PC-3 (cell line): ENCODE measurements at regions of chr21 and their contacts with region 1.

Region 1: GRCh38 chr21:33199516-33200217 is 30.1 kb upstream of the IFNAR2 start:
- DNase-seq: peak; percentile 95
- ATAC-seq: peak; percentile 60
- H3K4me3 ChIP-seq: no peak overlapping the region
- H3K27ac ChIP-seq: no peak overlapping the region
- H3K4me1 ChIP-seq: peaks cover 22% of the 10 kb centered on the region
- H3K27me3 ChIP-seq: no peaks in the 10 kb centered on the region
- CTCF ChIP-seq: peak; percentile 93

Region 2: GRCh38 chr21:32834916-32835235 is 364.8 kb before region 1 on chr21:
- CTCF ChIA-PET with region 1: no interaction called
- POLR2A ChIA-PET with region 1: no interaction called
- intact Hi-C with region 1: loop called (anchors 2 kb)
- DNase-seq: no peak
- ATAC-seq: no peak
- H3K4me3 ChIP-seq: no peak overlapping the region
- H3K27ac ChIP-seq: no peak overlapping the region
- H3K4me1 ChIP-seq: no peaks in the 10 kb centered on the region; the same call in 1 of the 2 replicates
- H3K27me3 ChIP-seq: peaks cover 55% of the 10 kb centered on the region
- CTCF ChIP-seq: no peak

Region 3: GRCh38 chr21:32994305-32994704 is 205.4 kb before region 1 on chr21:
- CTCF ChIA-PET with region 1: interaction called, 16 read pairs
- POLR2A ChIA-PET with region 1: no interaction called
- intact Hi-C with region 1: loop called (anchors 1 kb)
- DNase-seq: peak; percentile 65
- ATAC-seq: peak; percentile 77
- H3K4me3 ChIP-seq: no peak overlapping the region
- H3K27ac ChIP-seq: no peak overlapping the region
- H3K4me1 ChIP-seq: no peaks in the 10 kb centered on the region
- H3K27me3 ChIP-seq: peaks cover 53% of the 10 kb centered on the region
- CTCF ChIP-seq: peak; percentile 76

Region 4: DNA sequence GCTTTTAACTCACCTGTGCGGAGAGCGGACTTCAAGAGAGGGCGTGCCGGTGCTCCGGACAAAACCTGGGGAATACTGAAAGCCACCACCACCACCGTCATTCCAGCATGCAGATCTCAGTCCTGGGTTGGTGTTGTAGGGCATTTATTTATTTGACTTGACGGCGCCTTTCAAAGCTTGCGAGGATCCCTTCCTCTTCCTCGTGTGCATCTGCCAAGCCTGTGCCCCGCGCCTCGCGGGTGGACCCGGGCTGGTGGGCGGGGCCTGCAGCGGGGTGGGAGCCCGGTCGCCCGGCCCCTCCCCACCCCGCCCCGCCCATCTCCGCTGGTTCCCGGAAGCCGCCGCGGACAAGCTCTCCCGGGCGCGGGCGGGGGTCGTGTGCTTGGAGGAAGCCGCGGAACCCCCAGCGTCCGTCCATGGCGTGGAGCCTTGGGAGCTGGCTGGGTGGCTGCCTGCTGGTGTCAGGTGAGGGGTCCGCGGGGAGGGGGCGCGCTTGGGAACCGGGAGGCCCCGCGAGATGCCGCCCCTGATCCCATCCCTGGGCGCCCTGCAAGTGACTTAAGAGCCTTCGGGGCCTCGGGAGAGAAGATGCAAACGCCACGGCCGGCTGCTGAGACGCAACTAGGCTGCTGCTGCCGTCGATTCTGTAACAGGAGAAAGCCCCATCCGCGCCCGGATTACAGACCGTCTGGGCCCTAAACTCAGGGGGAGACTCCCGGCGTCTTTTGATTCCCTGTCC is 66.6 kb after region 1 on chr21 and contains the start of gene IL10RB:
- CTCF ChIA-PET with region 1: interaction called, 7 read pairs
- POLR2A ChIA-PET with region 1: no interaction called
- intact Hi-C with region 1: loop called (anchors 1 kb)
- DNase-seq: peak; percentile 66
- ATAC-seq: peak; percentile 79
- H3K4me3 ChIP-seq: peak within 1 kb of the TSS; percentile 88
- H3K27ac ChIP-seq: no peak within 1 kb of the TSS
- H3K4me1 ChIP-seq: peaks cover 14% of the 10 kb centered on the region
- H3K27me3 ChIP-seq: no peaks in the 10 kb centered on the region
- CTCF ChIP-seq: no peak
- total RNA-seq, gene IL10RB: 25.3 and 26.8 TPM in 2 replicates

Region 5: DNA sequence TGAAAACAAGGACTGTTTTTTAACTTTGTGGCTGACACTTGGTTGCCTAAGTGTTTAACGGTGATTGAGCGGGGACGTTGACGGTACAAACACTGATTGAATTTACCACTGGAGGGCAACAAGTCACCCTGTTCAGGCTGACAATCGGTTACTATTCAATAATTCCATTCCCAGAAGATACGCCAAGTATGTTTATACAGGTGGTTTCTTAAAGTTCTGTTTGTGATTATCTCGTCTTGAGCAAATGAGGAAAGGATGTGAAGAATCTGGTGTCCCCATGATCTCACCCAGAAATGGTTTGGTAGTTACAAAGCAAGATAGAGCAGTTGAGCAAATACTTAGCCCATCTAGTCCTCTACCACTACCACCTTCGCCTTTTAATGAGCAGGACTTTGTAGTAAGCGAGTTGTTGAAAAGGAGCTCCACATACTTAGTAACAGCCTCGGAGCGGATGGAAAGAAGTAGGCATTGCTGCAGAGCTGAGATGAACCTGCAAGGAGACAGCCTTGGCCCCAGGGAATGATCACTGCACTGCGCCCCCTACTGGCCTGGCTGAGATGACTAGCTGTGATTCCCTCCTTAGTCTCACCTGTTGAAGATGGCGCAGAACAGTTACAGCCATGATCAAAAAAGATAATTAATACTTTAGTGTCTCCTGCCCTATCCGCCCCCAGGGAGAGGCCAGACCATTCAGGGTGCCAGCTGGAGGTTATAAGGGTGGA is 161.4 kb after region 1 on chr21:
- CTCF ChIA-PET with region 1: interaction called, 12 read pairs
- POLR2A ChIA-PET with region 1: no interaction called
- intact Hi-C with region 1: loop called (anchors 1 kb)
- DNase-seq: peak; percentile 84
- ATAC-seq: peak; percentile 87
- H3K4me3 ChIP-seq: peak overlapping the region; percentile 32
- H3K27ac ChIP-seq: peak overlapping the region; percentile 68
- H3K4me1 ChIP-seq: peaks cover 23% of the 10 kb centered on the region
- H3K27me3 ChIP-seq: no peaks in the 10 kb centered on the region
- CTCF ChIP-seq: peak; percentile 87

Region 6: DNA sequence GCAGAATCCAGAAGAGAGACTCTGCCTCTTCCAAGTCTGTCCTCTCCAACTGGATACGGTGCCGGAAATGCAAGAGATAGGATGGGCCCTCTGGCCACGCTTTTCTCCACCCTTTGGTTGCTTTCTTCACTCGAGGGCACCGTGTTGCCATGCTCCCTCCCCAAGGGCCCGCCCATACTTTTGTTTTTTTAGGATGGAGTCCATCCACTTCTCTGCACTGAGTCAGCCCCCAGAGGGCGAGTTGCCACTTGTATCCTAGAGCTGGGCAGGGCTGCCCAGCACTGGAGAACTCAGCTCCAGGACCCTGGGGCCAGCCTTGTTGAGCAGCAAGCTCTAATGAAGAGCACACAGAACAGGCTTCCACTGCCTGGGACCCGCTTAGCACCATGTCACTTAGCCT is 229.0 kb after region 1 on chr21:
- CTCF ChIA-PET with region 1: no interaction called
- POLR2A ChIA-PET with region 1: no interaction called
- intact Hi-C with region 1: loop called (anchors 5 kb)
- DNase-seq: peak; percentile 95
- ATAC-seq: peak; percentile 78
- H3K4me3 ChIP-seq: peak overlapping the region; percentile 9; the same call in 1 of the 2 replicates
- H3K27ac ChIP-seq: peak overlapping the region; percentile 99
- H3K4me1 ChIP-seq: peaks cover 33% of the 10 kb centered on the region
- H3K27me3 ChIP-seq: no peaks in the 10 kb centered on the region
- CTCF ChIP-seq: no peak

Region 7: DNA sequence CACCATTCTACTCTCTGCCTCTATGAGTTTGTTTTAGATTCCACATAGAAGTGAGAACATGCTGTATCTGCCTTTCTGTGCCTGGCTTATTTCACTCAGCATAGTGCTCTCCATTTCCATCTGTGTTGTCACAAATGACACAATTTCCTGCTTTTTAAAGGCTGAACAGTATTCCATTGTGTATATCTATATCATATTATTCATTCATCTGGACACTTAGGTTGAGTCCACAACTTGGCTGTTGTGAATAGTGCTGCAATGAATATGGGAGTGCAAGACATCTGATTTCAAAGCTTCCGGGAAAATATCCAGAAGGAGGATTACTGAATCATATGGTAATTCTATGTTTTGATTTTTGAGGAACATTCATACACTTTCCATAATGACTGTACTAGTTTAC is 408.9 kb after region 1 on chr21:
- CTCF ChIA-PET with region 1: interaction called, 7 read pairs
- POLR2A ChIA-PET with region 1: no interaction called
- intact Hi-C with region 1: loop called (anchors 2 kb)
- DNase-seq: no peak
- ATAC-seq: peak; percentile 51
- H3K4me3 ChIP-seq: no peak overlapping the region
- H3K27ac ChIP-seq: no peak overlapping the region
- H3K4me1 ChIP-seq: peaks cover 5% of the 10 kb centered on the region
- H3K27me3 ChIP-seq: no peaks in the 10 kb centered on the region
- CTCF ChIP-seq: no peak